Activated T-helper 1 cell treated with anti-CD3 and anti-CD28 coated beads, Interleukin-12 subunit alpha, Interleukin-12 subunit beta, Interleukin-2, Interleukin-4 antibody, amounts not matched to agents 30 ng/mL and 10 ng/mL and 1 ng/mL, durations not matched to agents 14 hours and 24 hours and 36 hours (primary cell): ENCODE measurements at regions of chr11 and their contacts with region 1.

Region 1: GRCh38 chr11:99960536-99960935 is 726.6 kb upstream of the ARHGAP42 start:
- DNase-seq: no peak
- H3K4me3 Mint-ChIP-seq: no peak overlapping the region
- H3K27ac Mint-ChIP-seq: no peak overlapping the region
- H3K4me1 Mint-ChIP-seq: no peaks in the 10 kb centered on the region
- H3K27me3 Mint-ChIP-seq: no peaks in the 10 kb centered on the region

Region 2: GRCh38 chr11:99791356-99791755 is 169.2 kb before region 1 on chr11:
- intact Hi-C with region 1: loop called (anchors 5 kb)
- DNase-seq: no peak
- H3K4me3 Mint-ChIP-seq: no peak overlapping the region
- H3K27ac Mint-ChIP-seq: no peak overlapping the region
- H3K4me1 Mint-ChIP-seq: no peaks in the 10 kb centered on the region
- H3K27me3 Mint-ChIP-seq: no peaks in the 10 kb centered on the region